K562 (cell line): ENCODE measurements at regions of chr3 and their contacts with region 1.

Region 1: GRCh38 chr3:172039436-172040077 is at the start of gene FNDC3B:
- DNase-seq: peak; percentile 77 to 97 (median 83)
- ATAC-seq: peak; percentile 82
- H3K4me3 ChIP-seq: peak within 1 kb of the TSS; percentile 81
- H3K27ac ChIP-seq: peak within 1 kb of the TSS; percentile 88
- H3K4me1 ChIP-seq: peaks cover 35 to 37% of the 10 kb centered on the region in 2 experiments
- H3K27me3 ChIP-seq: no peaks in the 10 kb centered on the region
- CTCF ChIP-seq: no peak; a peak in 1 of 6 replicates
- EP300 ChIP-seq: peak; percentile 67
- POLR2A ChIP-seq: peak; percentile 89
- RAD21 ChIP-seq: peak in 1 of 2 experiments; percentile 44
- polyA plus RNA-seq, gene FNDC3B: 7.0 to 10.5 TPM

Region 2: GRCh38 chr3:171172070-171172469 is 867.5 kb before region 1 on chr3:
- CTCF ChIA-PET with region 1: no interaction called
- POLR2A ChIA-PET with region 1: no interaction called
- in situ Hi-C with region 1: no loop called
- intact Hi-C with region 1: no loop called
- DNase-seq: peak in 3 of 4 experiments; percentile 48 to 54 (median 49)
- ATAC-seq: peak; percentile 69; the same call in 2 of the 3 replicates
- H3K4me3 ChIP-seq: no peak overlapping the region
- H3K27ac ChIP-seq: no peak overlapping the region
- H3K4me1 ChIP-seq: no peaks in the 10 kb centered on the region; a peak in 2 of 5 replicates
- H3K27me3 ChIP-seq: no peaks in the 10 kb centered on the region
- CTCF ChIP-seq: peak; percentile 56 to 61 (median 59)
- EP300 ChIP-seq: no peak
- POLR2A ChIP-seq: no peak
- RAD21 ChIP-seq: peak in 1 of 2 experiments; percentile 19; a peak in 1 of 4 replicates

Region 3: GRCh38 chr3:171959532-171960089 is 79.9 kb before region 1 on chr3:
- CTCF ChIA-PET with region 1: no interaction called
- POLR2A ChIA-PET with region 1: interaction called, 6 read pairs
- in situ Hi-C with region 1: no loop called
- intact Hi-C with region 1: loop called (anchors 2 kb)
- DNase-seq: peak in 1 of 4 experiments; percentile 42
- ATAC-seq: peak; percentile 2; the same call in 2 of the 3 replicates
- H3K4me3 ChIP-seq: no peak overlapping the region
- H3K27ac ChIP-seq: peak overlapping the region; percentile 82
- H3K4me1 ChIP-seq: peaks cover 11 to 49% of the 10 kb centered on the region in 2 experiments; a peak in 4 of 5 replicates
- H3K27me3 ChIP-seq: no peaks in the 10 kb centered on the region
- CTCF ChIP-seq: no peak
- EP300 ChIP-seq: no peak
- POLR2A ChIP-seq: no peak
- RAD21 ChIP-seq: no peak

Region 4: DNA sequence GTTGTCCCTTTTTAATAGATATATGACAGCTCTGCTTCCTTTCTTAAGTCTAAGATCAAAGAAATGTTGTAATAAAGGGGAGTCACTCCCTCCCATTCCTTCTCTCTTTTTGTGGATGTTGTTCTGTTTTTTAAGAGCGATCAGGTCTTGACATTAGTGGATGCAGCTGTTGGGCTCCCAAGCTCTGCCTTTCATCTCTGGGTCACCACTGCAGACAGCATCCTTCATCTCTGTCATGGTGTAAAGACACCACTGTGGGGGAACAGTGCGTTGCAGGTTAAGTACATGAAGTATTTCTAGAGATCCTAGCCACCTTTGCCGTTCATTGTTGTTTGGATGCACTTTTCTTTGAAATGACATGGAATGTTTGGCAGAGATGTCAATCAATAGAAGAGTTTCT is 17.5 kb after region 1 on chr3:
- CTCF ChIA-PET with region 1: no interaction called
- POLR2A ChIA-PET with region 1: interaction called, 54 read pairs
- in situ Hi-C with region 1: no loop called
- intact Hi-C with region 1: no loop called
- DNase-seq: no peak
- ATAC-seq: peak; percentile 57
- H3K4me3 ChIP-seq: no peak overlapping the region
- H3K27ac ChIP-seq: no peak overlapping the region
- H3K4me1 ChIP-seq: peaks cover 0 to 3% of the 10 kb centered on the region in 2 experiments; a peak in 1 of 5 replicates
- H3K27me3 ChIP-seq: no peaks in the 10 kb centered on the region
- CTCF ChIP-seq: no peak
- EP300 ChIP-seq: no peak
- POLR2A ChIP-seq: no peak
- RAD21 ChIP-seq: no peak

Region 5: GRCh38 chr3:172106989-172107388 is 67.4 kb after region 1 on chr3:
- CTCF ChIA-PET with region 1: no interaction called
- POLR2A ChIA-PET with region 1: interaction called, 6 read pairs
- in situ Hi-C with region 1: no loop called
- intact Hi-C with region 1: loop called (anchors 2 kb)
- DNase-seq: peak in 3 of 4 experiments; percentile 24 to 84 (median 72)
- ATAC-seq: peak; percentile 81
- H3K4me3 ChIP-seq: no peak overlapping the region
- H3K27ac ChIP-seq: peak overlapping the region; percentile 47; the same call in 2 of the 3 replicates
- H3K4me1 ChIP-seq: peaks cover 8 to 41% of the 10 kb centered on the region in 2 experiments
- H3K27me3 ChIP-seq: no peaks in the 10 kb centered on the region
- CTCF ChIP-seq: no peak
- EP300 ChIP-seq: peak; percentile 44; the same call in 1 of the 2 replicates
- POLR2A ChIP-seq: no peak
- RAD21 ChIP-seq: no peak

Region 6: GRCh38 chr3:172201136-172201869 is 161.7 kb after region 1 on chr3:
- CTCF ChIA-PET with region 1: no interaction called
- POLR2A ChIA-PET with region 1: interaction called, 4 read pairs
- in situ Hi-C with region 1: no loop called
- intact Hi-C with region 1: loop called (anchors 5 kb)
- DNase-seq: peak; percentile 39 to 66 (median 50)
- ATAC-seq: peak; percentile 81
- H3K4me3 ChIP-seq: no peak overlapping the region
- H3K27ac ChIP-seq: peak overlapping the region; percentile 80
- H3K4me1 ChIP-seq: peaks cover 3 to 28% of the 10 kb centered on the region in 2 experiments; a peak in 4 of 5 replicates
- H3K27me3 ChIP-seq: no peaks in the 10 kb centered on the region
- CTCF ChIP-seq: no peak
- EP300 ChIP-seq: 0 out of 2 replicates have a peak, but pooled peaks have one; percentile 3
- POLR2A ChIP-seq: no peak
- RAD21 ChIP-seq: no peak